ENCODE measurements at regions of chr12 and their contacts with region 1.

Region 1: GRCh38 chr12:89225808-89226411 is 126.4 kb downstream of the DUSP6 start:
- DNase-seq: peak; percentile 99
- H3K4me3 ChIP-seq: peak overlapping the region in 1 of 3 experiments; percentile 5
- H3K27ac ChIP-seq: peak overlapping the region; percentile 96
- H3K4me1 ChIP-seq: peaks cover 37% of the 10 kb centered on the region
- H3K27me3 ChIP-seq: no peaks in the 10 kb centered on the region
- CTCF ChIP-seq: no peak

Region 2: GRCh38 chr12:89067421-89068187 is 158.3 kb before region 1 on chr12:
- CTCF ChIA-PET with region 1: no interaction called
- dilution Hi-C with region 1: no loop called
- in situ Hi-C with region 1: no loop called
- intact Hi-C with region 1: loop called (anchors 5 kb)
- DNase-seq: peak; percentile 95
- H3K4me3 ChIP-seq: no peak overlapping the region
- H3K27ac ChIP-seq: peak overlapping the region; percentile 77
- H3K4me1 ChIP-seq: peaks cover 40% of the 10 kb centered on the region
- H3K27me3 ChIP-seq: no peaks in the 10 kb centered on the region
- CTCF ChIP-seq: no peak

Region 3: GRCh38 chr12:89179983-89180382 is 45.9 kb before region 1 on chr12:
- CTCF ChIA-PET with region 1: no interaction called
- dilution Hi-C with region 1: no loop called
- in situ Hi-C with region 1: no loop called
- intact Hi-C with region 1: loop called (anchors 5 kb)
- DNase-seq: peak; percentile 97
- H3K4me3 ChIP-seq: no peak overlapping the region
- H3K27ac ChIP-seq: peak overlapping the region; percentile 81
- H3K4me1 ChIP-seq: peaks cover 41% of the 10 kb centered on the region
- H3K27me3 ChIP-seq: no peaks in the 10 kb centered on the region
- CTCF ChIP-seq: no peak

Region 4: GRCh38 chr12:89319122-89319521 is 93.2 kb after region 1 on chr12:
- CTCF ChIA-PET with region 1: no interaction called
- dilution Hi-C with region 1: no loop called
- in situ Hi-C with region 1: no loop called
- intact Hi-C with region 1: no loop called
- DNase-seq: peak; percentile 59
- H3K4me3 ChIP-seq: no peak overlapping the region
- H3K27ac ChIP-seq: peak overlapping the region; percentile 29
- H3K4me1 ChIP-seq: peaks cover 16% of the 10 kb centered on the region
- H3K27me3 ChIP-seq: no peaks in the 10 kb centered on the region
- CTCF ChIP-seq: no peak

Region 5: DNA sequence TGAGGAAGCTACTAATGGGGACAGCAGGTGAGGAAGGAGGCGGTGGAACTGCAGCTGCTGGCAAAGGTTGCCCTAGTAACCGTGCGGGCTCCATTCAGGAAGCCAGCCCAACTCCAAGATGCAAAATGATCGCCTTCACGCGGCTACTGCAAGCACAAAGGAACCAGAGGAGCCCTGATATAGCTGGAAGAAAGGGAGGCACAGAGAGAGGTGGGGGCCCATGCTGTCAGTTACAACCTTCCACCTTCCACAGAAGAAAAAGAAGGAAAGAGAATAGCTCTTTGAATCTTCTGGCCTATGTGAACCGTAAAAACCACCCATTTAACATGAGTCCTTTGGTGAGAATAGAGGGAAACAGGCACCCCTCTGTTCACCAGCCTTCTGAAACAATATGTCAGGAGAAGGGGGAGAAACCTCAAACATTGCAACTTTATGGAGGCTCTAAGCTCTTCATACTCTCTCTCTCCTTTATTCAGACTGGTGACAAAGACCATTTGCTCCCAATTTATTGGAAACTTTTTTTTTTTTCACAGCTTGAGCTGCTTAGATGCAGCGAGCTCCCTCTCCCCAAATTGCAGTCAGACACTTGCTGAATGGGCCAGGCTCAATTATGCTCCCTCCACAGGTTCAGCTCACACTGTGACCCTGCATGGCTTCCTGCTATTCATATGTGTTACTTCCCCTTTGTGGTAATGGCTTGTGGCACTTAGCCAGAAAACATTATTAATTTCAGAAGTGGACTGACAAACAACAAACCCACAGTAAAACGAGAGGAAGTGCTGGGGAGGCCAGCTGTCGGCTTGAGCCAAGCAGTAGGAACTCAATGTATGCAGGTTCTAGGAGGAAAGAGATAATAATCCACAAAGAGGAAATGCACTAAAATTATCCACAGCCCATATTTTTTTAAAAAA is 120.2 kb after region 1 on chr12:
- CTCF ChIA-PET with region 1: interaction called, 6 read pairs
- dilution Hi-C with region 1: no loop called
- in situ Hi-C with region 1: no loop called
- intact Hi-C with region 1: loop called (anchors 1 kb)
- DNase-seq: peak; percentile 82
- H3K4me3 ChIP-seq: no peak overlapping the region
- H3K27ac ChIP-seq: peak overlapping the region; percentile 19
- H3K4me1 ChIP-seq: peaks cover 17% of the 10 kb centered on the region
- H3K27me3 ChIP-seq: no peaks in the 10 kb centered on the region
- CTCF ChIP-seq: no peak

Region 6: DNA sequence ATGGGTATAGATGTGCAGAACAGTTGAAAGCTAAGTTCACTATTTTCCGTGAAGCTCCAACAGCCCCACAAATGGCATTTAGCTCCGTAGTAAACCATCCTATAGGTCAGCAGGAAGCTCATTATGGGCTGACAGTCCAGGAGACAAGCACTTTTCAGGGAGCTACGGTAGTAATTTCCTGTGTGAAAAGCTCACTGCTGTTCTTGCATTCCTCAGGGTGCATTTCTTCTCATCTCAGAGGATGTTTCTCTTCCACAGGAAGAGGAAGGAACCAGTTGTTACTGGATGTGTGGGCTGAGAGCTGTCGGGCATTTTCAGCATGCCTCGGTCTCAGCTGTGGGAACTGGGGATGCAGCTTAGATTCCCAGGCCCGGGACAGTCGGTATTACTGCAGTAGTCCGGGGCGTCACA is 225.9 kb after region 1 on chr12:
- CTCF ChIA-PET with region 1: no interaction called
- dilution Hi-C with region 1: no loop called
- in situ Hi-C with region 1: no loop called
- intact Hi-C with region 1: no loop called
- DNase-seq: peak; percentile 74
- H3K4me3 ChIP-seq: no peak overlapping the region
- H3K27ac ChIP-seq: peak overlapping the region; percentile 85
- H3K4me1 ChIP-seq: peaks cover 30% of the 10 kb centered on the region
- H3K27me3 ChIP-seq: no peaks in the 10 kb centered on the region
- CTCF ChIP-seq: no peak